Calu3 (cell line): ENCODE measurements at regions of chr18 and their contacts with region 1.

Region 1: GRCh38 chr18:43757273-43757672 is 480.0 kb upstream of the SYT4 start:
- DNase-seq: no peak
- H3K4me3 Mint-ChIP-seq: peak overlapping the region; percentile 2
- H3K27ac Mint-ChIP-seq: peak overlapping the region; percentile 69
- H3K4me1 Mint-ChIP-seq: peaks cover 49% of the 10 kb centered on the region
- H3K27me3 Mint-ChIP-seq: no peaks in the 10 kb centered on the region
- CTCF ChIP-seq: no peak

Region 2: DNA sequence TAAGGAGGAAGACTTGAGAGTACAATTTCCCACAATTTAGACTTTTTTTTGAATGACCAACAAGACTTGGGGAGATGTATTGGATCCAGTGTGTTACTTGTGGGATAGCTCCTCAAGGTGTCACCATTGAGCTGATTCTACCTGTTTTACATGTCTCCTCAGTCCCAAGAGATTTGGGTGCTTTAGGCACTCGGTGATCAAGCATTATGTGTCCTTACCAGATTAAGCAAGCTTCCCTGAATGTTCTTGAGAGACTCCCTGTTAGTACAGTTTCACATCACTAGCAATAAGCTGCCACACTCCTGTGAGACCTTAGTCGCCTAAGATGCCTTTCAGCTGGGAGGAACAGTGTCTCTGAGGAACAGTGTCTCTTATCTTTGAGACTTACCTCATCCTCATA is 95.7 kb before region 1 on chr18:
- CTCF ChIA-PET with region 1: no interaction called
- intact Hi-C with region 1: loop called (anchors 2 kb)
- DNase-seq: peak; percentile 61
- H3K4me3 Mint-ChIP-seq: no peak overlapping the region
- H3K27ac Mint-ChIP-seq: peak overlapping the region; percentile 70
- H3K4me1 Mint-ChIP-seq: peaks cover 17% of the 10 kb centered on the region
- H3K27me3 Mint-ChIP-seq: no peaks in the 10 kb centered on the region
- CTCF ChIP-seq: peak; percentile 58

Region 3: GRCh38 chr18:43719351-43719750 is 37.9 kb before region 1 on chr18:
- CTCF ChIA-PET with region 1: no interaction called
- intact Hi-C with region 1: loop called (anchors 5 kb)
- DNase-seq: peak; percentile 82
- H3K4me3 Mint-ChIP-seq: peak overlapping the region; percentile 43
- H3K27ac Mint-ChIP-seq: peak overlapping the region; percentile 87
- H3K4me1 Mint-ChIP-seq: peaks cover 27% of the 10 kb centered on the region
- H3K27me3 Mint-ChIP-seq: no peaks in the 10 kb centered on the region
- CTCF ChIP-seq: no peak

Region 4: DNA sequence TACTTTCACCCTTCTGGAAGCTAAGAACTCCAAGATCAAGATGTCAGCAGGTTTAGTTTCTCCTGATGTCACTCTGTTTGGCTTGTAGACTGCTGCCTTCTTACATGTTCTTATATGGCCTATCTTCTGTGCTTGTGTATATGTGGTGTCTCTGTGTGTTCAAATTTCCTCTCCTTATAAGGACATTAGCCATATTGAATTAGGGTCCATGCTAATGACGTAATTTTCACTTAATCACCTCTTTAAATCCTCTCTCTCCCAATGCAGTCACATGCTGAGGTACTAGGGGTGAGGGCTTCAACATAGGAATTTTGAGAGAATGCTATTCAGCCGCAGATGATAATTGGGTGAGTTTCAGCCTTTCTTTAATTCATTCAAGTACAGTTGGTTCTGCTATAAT is 21.7 kb before region 1 on chr18:
- CTCF ChIA-PET with region 1: no interaction called
- intact Hi-C with region 1: loop called (anchors 2 kb)
- DNase-seq: no peak
- H3K4me3 Mint-ChIP-seq: no peak overlapping the region
- H3K27ac Mint-ChIP-seq: no peak overlapping the region
- H3K4me1 Mint-ChIP-seq: peaks cover 36% of the 10 kb centered on the region
- H3K27me3 Mint-ChIP-seq: no peaks in the 10 kb centered on the region
- CTCF ChIP-seq: no peak

Region 5: GRCh38 chr18:43805646-43806194 is 48.4 kb after region 1 on chr18:
- CTCF ChIA-PET with region 1: no interaction called
- intact Hi-C with region 1: no loop called
- DNase-seq: no peak
- H3K4me3 Mint-ChIP-seq: no peak overlapping the region
- H3K27ac Mint-ChIP-seq: no peak overlapping the region
- H3K4me1 Mint-ChIP-seq: no peaks in the 10 kb centered on the region
- H3K27me3 Mint-ChIP-seq: no peaks in the 10 kb centered on the region
- CTCF ChIP-seq: no peak